HEK293 (cell line): ENCODE measurements at regions of chr10 and their contacts with region 1.

Region 1: GRCh38 chr10:106338486-106338885 is 826.0 kb downstream of the SORCS1 start:
- H3K4me3 ChIP-seq: no peak overlapping the region
- H3K27ac ChIP-seq: no peak overlapping the region
- H3K4me1 ChIP-seq: no peaks in the 10 kb centered on the region
- CTCF ChIP-seq: no peak

Region 2: GRCh38 chr10:106355450-106355849 is 17.0 kb after region 1 on chr10:
- CTCF ChIA-PET with region 1: interaction called, 13 read pairs
- POLR2A ChIA-PET with region 1: no interaction called
- H3K4me3 ChIP-seq: no peak overlapping the region
- H3K27ac ChIP-seq: no peak overlapping the region
- H3K4me1 ChIP-seq: no peaks in the 10 kb centered on the region
- CTCF ChIP-seq: no peak